Sigmoid colon (tissue), 7 donors: ENCODE measurements at regions of chr3 and their contacts with region 1.

Region 1: DNA sequence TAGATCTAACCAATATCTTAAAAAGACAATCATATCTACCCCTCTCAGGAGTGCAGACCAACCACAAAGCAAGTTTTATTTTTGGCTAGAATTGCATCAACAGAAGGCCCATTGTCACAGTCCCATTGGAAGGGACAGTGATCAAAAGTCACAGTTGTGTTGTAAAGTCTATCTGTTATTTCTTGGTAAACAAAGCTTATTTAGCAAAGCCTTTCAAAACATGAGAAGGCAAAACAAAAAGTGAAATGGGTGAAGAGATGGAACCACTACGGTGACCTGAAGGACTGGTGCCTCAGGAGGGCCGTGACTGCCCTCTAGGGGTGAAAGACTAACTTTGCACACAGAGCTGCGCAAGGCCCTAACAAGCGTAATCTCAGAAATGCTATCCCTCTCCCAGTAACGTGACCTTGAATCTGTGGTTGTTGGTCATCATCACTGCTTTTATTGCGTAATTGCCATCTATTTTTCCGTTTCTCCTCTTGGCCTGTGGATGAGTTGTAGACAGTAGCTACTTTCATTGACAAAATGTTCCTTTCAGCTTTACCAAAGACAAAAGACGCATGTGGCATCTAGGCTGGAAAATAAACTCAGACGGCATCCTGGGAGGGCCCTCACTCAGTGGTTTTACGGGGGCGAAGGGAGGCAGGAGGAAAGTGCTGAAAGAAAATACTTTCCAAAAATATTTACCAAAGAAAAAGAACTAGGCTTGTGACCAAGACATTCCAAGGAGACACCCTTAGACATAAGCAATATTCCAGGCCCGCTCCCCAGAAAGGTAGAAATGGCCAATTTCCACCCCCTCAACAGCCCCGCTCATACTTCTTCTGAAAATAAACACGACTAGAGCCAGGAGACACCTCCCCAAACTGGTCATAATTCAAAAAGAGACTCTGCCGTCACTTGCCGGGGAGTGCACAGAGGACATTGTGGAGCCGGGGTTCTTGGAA is 79.4 kb downstream of the FRMD4B start:
- DNase-seq: peak; percentile 90
- H3K4me3 ChIP-seq: no peak overlapping the region
- H3K27ac ChIP-seq: peak overlapping the region; percentile 45 to 70 (median 60)
- H3K4me1 ChIP-seq: peaks cover 0 to 17% (median 13%) of the 10 kb centered on the region in 4 donors
- H3K27me3 ChIP-seq: no peaks in the 10 kb centered on the region
- CTCF ChIP-seq: peak; percentile 63 to 87 (median 84)
- EP300 ChIP-seq: peak in 1 of 4 donors; percentile 64
- POLR2A ChIP-seq: no peak

Region 2: DNA sequence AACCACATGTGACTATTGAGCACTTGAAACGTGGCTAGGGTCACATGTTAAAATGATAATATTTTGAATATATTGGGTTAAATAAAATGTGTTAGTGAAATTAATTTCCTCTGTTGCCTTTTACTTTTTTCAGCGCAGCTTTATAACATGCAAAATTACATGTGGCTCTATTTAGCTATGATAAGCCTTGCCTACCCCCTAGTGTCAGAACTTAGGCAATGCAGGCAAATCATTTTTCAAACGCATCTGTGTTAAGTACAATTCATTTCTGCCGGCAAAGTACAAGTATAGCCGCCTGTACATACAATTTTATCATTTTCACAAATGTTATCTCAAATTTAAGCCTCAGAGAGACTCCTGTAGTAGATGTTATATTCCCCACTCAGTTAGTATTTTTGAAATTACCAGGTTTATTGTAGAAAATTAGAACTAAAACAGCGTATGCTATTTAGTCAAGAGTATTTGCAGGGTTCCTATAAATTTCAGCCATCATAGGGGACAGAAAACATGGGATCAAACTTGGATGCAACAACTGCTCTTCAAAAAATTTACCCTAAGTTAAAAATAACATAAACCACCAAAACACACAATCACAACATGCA is 430.3 kb before region 1 on chr3:
- intact Hi-C with region 1: no loop called
- DNase-seq: no peak
- H3K4me3 ChIP-seq: no peak overlapping the region
- H3K27ac ChIP-seq: no peak overlapping the region
- H3K4me1 ChIP-seq: peaks cover 0 to 13% (median 10%) of the 10 kb centered on the region in 4 donors
- H3K27me3 ChIP-seq: no peaks in the 10 kb centered on the region
- CTCF ChIP-seq: peak; percentile 47 to 89 (median 86)
- EP300 ChIP-seq: no peak
- POLR2A ChIP-seq: no peak

Region 3: GRCh38 chr3:69558912-69559311 is 252.4 kb after region 1 on chr3:
- intact Hi-C with region 1: no loop called
- DNase-seq: peak; percentile 76
- H3K4me3 ChIP-seq: no peak overlapping the region
- H3K27ac ChIP-seq: no peak overlapping the region
- H3K4me1 ChIP-seq: peaks cover 0 to 6% (median 0%) of the 10 kb centered on the region in 4 donors
- H3K27me3 ChIP-seq: no peaks in the 10 kb centered on the region
- CTCF ChIP-seq: no peak
- EP300 ChIP-seq: no peak
- POLR2A ChIP-seq: no peak

Region 4: GRCh38 chr3:69665026-69665737 is 358.7 kb after region 1 on chr3:
- intact Hi-C with region 1: loop called (anchors 5 kb)
- DNase-seq: no peak
- H3K4me3 ChIP-seq: no peak overlapping the region
- H3K27ac ChIP-seq: peak overlapping the region in 1 of 4 donors; percentile 1
- H3K4me1 ChIP-seq: peaks cover 0 to 9% (median 7%) of the 10 kb centered on the region in 4 donors
- H3K27me3 ChIP-seq: peaks cover 0 to 7% (median 0%) of the 10 kb centered on the region in 3 donors
- CTCF ChIP-seq: no peak
- EP300 ChIP-seq: no peak
- POLR2A ChIP-seq: no peak